Cardiac septum (tissue), 1 donor: ENCODE measurements at regions of chr22 and their contacts with region 1.

Region 1: DNA sequence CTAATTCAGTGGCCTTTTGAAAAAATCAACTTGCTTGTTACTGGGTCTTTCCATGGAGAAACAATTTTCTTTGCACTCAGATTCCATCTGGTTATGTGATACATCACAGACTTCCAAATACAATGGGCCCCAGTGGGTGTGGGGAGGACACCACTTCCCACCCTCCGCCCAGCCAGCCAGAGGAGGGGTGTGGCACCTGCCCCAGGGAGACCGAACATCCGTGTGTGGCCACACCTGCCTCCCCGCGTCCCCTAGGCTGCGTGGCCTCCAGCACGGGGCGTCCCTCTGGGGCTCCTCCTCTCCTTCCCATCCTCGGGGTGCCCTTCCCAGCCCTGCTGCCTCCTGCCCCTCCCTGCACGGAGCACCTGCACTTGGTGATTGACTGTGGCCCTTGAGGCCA is 49.1 kb downstream of the CERK start:
- DNase-seq: no peak

Region 2: DNA sequence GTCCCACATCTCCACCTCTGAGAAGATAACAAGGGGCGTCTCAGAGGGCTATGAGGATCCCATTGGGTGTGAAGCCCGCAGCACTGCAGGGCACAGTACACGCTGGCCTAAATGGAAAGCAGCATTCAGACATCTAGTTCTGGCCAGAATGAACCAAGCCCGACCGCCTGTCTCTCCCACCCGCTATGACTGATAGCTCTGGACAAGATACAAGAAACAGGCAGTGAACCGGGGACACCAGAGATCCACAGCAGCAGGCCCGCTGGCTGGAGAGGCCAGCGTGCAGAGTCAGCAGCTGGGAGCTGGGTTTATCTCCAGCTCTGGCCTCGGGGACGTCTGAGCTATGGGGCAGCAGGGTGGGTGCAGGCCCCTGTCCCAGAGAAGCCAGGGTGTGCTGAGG is 39.6 kb after region 1 on chr22:
- intact Hi-C with region 1: loop called (anchors 2 kb)
- DNase-seq: no peak

Region 3: DNA sequence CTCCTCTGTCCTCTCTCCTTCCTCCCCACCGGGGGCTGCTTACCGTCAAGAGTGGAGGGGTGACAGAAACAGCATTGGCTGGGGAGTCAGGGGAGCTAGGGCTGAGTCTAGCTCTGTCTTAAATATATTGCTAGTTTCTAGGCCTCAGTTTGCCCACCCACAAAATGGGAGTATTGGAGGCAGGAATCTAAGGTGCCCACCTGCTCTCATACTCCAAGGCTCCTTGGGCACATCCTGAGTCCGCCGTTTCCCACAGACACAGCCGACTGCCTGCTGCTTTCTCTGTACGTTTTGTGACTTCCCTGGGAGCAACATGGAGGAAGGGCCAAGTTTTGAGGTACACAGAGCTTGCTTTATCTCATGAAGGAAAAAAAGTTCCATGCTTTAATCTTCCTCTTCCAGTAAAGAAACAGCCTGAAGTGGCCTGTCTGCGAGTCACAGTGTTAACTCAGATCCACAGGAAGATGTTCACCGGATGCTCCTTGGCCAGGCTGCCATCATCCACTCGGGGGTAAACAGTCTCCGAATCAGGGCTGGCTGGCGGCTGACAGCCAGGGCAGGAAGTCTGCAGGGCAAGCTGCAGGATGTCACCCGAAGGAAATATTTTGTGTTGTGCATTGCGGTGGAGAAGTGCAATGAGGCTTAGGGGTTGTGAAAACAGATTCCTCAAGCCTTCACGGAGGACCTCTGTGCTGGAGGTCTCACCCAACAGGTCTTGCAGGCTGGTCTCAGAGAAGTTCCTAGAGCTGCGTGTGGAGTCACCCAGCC is 60.2 kb after region 1 on chr22:
- intact Hi-C with region 1: no loop called
- DNase-seq: no peak

Region 4: GRCh38 chr22:46923394-46923793 is 234.5 kb after region 1 on chr22:
- intact Hi-C with region 1: no loop called
- DNase-seq: no peak